Natural killer cell (primary cell): ENCODE measurements at regions of chr1 and their contacts with region 1.

Region 1: DNA sequence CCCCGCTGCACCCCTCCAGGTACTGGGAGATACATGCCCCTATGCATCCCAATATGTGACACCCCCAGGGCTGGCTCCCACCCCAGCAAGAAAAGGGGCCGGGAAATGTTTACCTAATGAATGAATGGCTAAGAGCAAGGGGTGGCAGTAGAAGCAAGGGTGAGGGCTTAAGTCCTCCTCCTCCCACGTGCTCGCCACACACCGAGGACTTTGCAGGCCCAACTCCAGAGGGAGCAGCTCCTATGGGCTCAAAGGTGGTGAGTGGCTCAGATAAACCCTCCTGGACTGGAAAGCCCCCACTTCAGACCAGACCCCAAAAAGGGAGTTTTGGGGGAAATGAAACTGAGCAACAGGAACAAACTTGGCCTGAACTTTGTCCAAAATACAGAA is 11.4 kb downstream of the SLC45A3 start:
- DNase-seq: no peak
- ATAC-seq: peak in 1 of 3 donors; percentile 25
- H3K4me3 ChIP-seq: no peak overlapping the region
- H3K4me3 Mint-ChIP-seq: no peak overlapping the region
- H3K27ac ChIP-seq: peak overlapping the region; percentile 57
- H3K27ac Mint-ChIP-seq: no peak overlapping the region
- H3K4me1 ChIP-seq: peaks cover 54% of the 10 kb centered on the region
- H3K4me1 Mint-ChIP-seq: no peaks in the 10 kb centered on the region
- H3K27me3 ChIP-seq: no peaks in the 10 kb centered on the region
- H3K27me3 Mint-ChIP-seq: peaks cover 7 to 11% of the 10 kb centered on the region in 2 donors
- CTCF ChIP-seq: no peak

Region 2: DNA sequence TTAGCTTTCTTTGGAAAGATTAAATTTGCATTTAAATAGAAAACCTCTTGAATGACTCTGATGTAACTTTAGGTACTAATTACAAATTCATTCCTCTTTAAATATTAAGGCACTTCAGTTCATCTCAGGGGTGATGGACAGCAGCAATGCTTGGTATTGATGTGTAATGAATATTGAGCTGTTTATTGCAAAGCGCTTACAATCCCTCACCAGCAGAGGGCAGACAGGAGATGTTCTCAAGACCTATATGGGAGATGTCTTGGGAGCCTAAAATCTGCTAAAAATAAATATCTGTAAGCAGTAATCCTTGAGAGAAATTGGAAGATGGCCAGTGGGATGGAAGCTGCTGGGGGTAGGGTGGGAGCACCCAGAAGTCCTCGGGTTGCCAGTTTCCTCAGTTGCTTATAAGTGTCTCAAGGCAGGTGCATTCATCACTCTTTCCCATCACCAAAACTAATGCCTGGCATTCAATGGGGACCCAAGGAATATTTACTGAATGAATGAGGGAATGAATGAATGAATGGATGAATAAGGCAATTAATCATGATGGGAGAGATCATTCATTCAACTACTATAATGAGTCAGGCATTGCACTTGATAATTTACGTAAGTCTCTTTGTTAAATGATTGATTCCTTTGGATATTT is 314.6 kb before region 1 on chr1:
- intact Hi-C with region 1: loop called (anchors 10 kb)
- DNase-seq: peak; percentile 29 to 85
- ATAC-seq: peak; percentile 51 to 81 (median 80)
- H3K4me3 ChIP-seq: no peak overlapping the region
- H3K4me3 Mint-ChIP-seq: no peak overlapping the region
- H3K27ac ChIP-seq: no peak overlapping the region
- H3K27ac Mint-ChIP-seq: no peak overlapping the region
- H3K4me1 ChIP-seq: peaks cover 10% of the 10 kb centered on the region
- H3K4me1 Mint-ChIP-seq: no peaks in the 10 kb centered on the region
- H3K27me3 ChIP-seq: no peaks in the 10 kb centered on the region
- H3K27me3 Mint-ChIP-seq: peaks cover 14 to 31% of the 10 kb centered on the region in 2 donors
- CTCF ChIP-seq: peak; percentile 90

Region 3: DNA sequence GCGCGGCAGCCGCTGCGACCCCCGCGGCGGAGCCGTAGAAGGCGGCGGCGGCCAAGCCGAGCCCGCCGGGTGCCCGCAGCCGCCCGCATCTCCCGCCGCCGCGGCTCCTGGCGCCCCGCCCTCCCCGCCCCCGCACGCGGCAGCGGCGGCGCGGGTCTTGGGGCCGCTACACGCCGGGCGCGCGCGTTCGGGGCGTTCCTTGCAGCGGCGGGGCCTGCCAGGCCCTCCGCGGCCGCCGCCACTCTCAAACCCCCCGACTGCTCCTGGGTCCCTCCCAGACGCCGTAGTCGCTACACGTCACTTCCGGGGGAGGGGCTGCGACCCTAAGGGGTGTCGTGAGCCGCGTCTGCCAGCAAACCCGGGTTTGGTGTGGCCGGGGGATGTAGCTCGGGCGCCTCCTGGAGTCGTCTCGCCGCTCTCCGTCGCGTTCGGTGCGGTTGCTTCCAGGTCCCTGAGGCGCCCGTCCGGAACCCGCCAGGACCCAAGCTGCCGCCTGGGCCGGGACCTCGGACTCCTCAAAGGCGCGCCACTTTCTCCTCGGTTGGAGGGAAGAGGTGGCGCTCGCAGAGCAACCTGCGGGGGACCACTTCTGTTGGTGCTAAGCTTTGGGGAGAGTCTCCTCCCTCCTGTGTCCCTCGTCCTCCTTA is 37.1 kb before region 1 on chr1 and contains the start of gene ELK4:
- intact Hi-C with region 1: no loop called
- DNase-seq: peak; percentile 99 to 100
- ATAC-seq: peak; percentile 83 to 93 (median 84)
- H3K4me3 ChIP-seq: peak within 1 kb of the TSS; percentile 74
- H3K4me3 Mint-ChIP-seq: peak within 1 kb of the TSS; percentile 97
- H3K27ac ChIP-seq: peak within 1 kb of the TSS; percentile 97
- H3K27ac Mint-ChIP-seq: peak within 1 kb of the TSS; percentile 97 to 99
- H3K4me1 ChIP-seq: peaks cover 22% of the 10 kb centered on the region
- H3K4me1 Mint-ChIP-seq: peaks cover 31 to 37% of the 10 kb centered on the region in 2 donors
- H3K27me3 ChIP-seq: no peaks in the 10 kb centered on the region
- H3K27me3 Mint-ChIP-seq: peaks cover 0 to 5% of the 10 kb centered on the region in 2 donors
- CTCF ChIP-seq: peak; percentile 75
- total RNA-seq, gene ELK4: 107 to 155 (median 139) TPM

Region 4: GRCh38 chr1:205700865-205701401 is 32.0 kb after region 1 on chr1:
- intact Hi-C with region 1: no loop called
- DNase-seq: no peak
- ATAC-seq: no peak
- H3K4me3 ChIP-seq: no peak overlapping the region
- H3K4me3 Mint-ChIP-seq: no peak overlapping the region
- H3K27ac ChIP-seq: no peak overlapping the region
- H3K27ac Mint-ChIP-seq: no peak overlapping the region
- H3K4me1 ChIP-seq: no peaks in the 10 kb centered on the region
- H3K4me1 Mint-ChIP-seq: no peaks in the 10 kb centered on the region
- H3K27me3 ChIP-seq: no peaks in the 10 kb centered on the region
- H3K27me3 Mint-ChIP-seq: peaks cover 11 to 12% of the 10 kb centered on the region in 2 donors
- CTCF ChIP-seq: no peak